Activated CD4-positive, alpha-beta T cell treated with anti-CD3 and anti-CD28 coated beads, Interleukin-2, amount 10 ng/mL, durations not matched to agents 24 days and 14 days (primary cell): ENCODE measurements at regions of chr17 and their contacts with region 1.

Region 1: DNA sequence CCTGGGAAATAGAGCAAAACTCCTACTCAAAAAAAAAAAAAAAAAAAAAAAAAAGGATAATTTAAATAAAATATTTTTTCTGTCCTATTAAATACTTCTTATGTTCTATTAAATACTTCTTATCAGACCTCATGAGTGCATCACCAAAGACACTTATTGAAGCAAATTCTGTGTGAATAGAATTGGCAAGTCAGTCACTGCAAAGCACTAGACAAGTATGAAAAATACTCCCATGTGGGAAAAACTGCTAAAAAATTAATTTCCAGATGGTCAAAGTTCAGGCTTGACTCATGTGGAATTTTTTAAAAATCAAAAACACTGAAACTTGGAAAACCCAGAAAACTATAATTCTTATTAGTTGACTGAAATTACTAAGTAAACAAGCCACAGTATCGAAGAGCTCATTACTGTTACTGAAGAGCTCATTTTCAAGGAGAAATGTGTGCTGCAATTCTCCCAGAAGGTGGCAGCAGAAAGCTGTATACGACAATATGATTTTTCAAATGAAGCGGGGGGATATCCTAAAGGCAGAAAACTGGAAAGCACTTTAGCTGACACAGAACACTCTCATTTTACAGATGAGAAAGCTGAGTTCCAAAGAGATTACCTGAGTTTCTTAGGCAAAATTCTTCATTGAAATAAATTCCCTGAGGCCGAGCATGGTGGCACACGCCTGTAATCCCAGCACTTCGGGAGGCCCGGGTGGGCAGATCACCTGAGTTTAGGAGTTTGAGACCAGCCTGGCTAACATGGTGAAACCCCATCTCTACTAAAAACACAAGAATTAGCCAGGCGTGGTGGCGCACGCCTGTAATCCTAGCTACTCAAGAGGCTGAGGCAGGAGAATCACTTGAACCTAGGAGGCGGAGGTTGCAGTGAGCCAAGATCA is 15.9 kb upstream of the FBXO47 start:
- DNase-seq: peak; percentile 84
- H3K4me3 Mint-ChIP-seq: no peak overlapping the region
- H3K27ac Mint-ChIP-seq: no peak overlapping the region
- H3K4me1 Mint-ChIP-seq: peaks cover 5% of the 10 kb centered on the region
- H3K27me3 Mint-ChIP-seq: peaks cover 15% of the 10 kb centered on the region

Region 2: GRCh38 chr17:39099663-39100286 is 116.7 kb after region 1 on chr17:
- intact Hi-C with region 1: loop called (anchors 10 kb)
- DNase-seq: no peak
- H3K4me3 Mint-ChIP-seq: no peak overlapping the region
- H3K27ac Mint-ChIP-seq: no peak overlapping the region
- H3K4me1 Mint-ChIP-seq: peaks cover 28% of the 10 kb centered on the region
- H3K27me3 Mint-ChIP-seq: peaks cover 6% of the 10 kb centered on the region

Region 3: DNA sequence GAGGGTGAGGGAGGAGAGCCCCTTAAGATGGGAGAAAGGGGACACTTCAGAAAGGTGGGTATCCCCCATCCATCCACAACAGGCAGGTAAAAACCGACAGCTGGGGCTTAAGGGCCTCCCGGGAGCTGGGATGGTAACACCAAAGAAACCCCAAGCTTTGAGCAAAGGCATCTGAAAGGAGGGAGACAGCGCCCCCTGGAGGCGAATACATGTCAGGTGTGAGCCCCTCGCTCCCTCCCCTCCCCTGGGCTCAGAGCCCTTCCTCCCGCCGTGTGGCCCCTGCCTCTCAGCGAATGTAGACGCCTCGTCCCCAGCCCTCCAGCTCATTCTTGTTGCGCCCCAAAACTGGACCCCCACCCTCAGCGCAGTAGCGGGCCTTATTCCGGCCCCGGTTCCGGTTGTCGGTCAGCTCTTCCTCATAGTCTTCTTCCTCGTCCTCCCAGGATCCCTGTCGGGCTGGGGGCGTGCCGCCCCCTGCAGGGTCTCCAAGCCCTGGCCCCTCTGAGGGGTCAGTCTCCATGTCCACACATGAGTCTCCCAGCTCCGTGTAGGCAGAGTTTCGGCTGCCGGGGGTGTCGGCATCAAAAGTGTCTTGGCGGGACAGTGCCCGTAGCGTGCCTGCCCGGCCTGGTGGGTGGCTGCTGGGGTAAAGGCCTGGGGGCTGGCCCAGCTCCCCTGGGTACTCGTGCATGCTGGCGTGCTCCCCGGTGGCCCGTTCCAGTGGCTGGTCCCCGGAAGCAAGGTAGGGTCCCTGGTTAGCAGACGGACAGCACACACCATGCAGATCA is 192.0 kb after region 1 on chr17:
- intact Hi-C with region 1: loop called (anchors 2 kb)
- DNase-seq: peak; percentile 92
- H3K4me3 Mint-ChIP-seq: no peak overlapping the region
- H3K27ac Mint-ChIP-seq: no peak overlapping the region
- H3K4me1 Mint-ChIP-seq: peaks cover 9% of the 10 kb centered on the region
- H3K27me3 Mint-ChIP-seq: peaks cover 6% of the 10 kb centered on the region

Region 4: DNA sequence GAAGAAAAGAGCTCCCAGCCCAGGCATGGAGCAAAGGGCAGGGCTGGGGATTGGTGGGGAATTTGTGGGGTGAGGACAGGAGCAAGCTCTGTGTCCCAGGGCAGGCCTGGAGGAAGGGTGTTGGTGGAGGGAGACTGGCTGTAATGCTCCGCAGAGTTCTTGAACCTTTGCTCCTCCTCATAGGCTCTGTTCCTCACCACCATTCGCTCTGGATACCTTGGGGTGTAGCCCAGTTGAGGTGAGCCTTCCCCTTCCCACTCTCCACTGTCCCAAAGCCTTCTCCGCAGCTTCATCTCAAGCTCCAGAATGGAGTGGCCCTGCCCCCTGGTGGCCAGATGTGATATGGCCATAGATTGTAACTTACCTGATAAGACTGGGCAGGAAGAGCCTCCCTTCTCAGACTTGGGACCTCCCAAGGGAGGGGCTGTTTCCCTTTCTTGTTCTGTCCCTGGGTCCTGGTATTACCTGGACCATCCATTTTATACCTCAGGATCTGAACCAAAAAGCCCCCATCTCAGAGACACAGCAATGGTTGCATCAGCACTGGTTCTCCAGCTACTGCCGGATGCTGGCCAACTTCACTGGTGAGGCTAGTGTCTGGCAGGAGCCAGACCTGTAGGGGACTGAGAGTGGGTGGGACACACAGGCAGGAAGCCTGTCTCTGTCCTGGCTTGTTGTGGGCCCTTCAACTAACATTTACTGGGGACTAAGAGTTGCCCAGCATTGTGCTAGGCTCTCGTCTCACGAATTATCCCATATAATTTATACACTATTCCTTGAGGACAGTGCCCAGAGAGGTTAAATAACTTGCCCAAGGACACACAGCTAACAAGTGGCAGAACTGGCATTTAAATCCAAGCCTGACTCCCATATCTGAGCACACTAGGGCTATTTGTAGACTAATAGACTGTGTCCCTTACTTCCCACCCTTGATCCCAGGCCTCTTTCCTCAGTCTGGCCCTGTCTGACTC is 261.8 kb after region 1 on chr17:
- intact Hi-C with region 1: loop called (anchors 5 kb)
- DNase-seq: peak; percentile 95
- H3K4me3 Mint-ChIP-seq: no peak overlapping the region
- H3K27ac Mint-ChIP-seq: no peak overlapping the region
- H3K4me1 Mint-ChIP-seq: peaks cover 4% of the 10 kb centered on the region
- H3K27me3 Mint-ChIP-seq: no peaks in the 10 kb centered on the region